IMR-90 (cell line): ENCODE measurements at regions of chr7 and their contacts with region 1.

Region 1: DNA sequence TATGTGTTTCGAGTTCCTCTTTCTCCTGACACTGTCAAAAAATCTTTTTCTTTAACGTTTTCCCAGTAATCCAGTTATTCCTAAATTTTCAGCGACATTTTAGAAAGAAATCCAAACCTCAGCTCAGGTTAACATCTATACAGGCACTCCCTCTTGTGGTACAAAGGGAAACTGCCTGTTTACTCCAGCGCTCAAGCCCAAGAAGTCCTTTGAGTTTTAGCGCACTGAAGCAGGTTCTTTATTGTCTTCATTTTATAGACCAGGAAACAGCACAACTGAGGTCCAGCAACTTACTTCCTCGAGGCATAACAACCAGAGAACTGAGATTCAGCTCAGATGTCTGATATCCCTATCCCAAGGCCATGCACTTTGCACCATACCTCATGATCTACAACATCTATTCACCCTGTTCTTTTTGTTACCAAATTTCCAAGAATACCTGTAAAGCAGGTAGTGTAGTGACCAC is 287.2 kb upstream of the MKLN1 start:
- DNase-seq: peak; percentile 77
- ATAC-seq: peak; percentile 85
- H3K4me3 ChIP-seq: no peak overlapping the region
- H3K27ac ChIP-seq: no peak overlapping the region
- H3K4me1 ChIP-seq: peaks cover 11% of the 10 kb centered on the region
- H3K27me3 ChIP-seq: no peaks in the 10 kb centered on the region
- CTCF ChIP-seq: peak; percentile 88
- POLR2A ChIP-seq: no peak
- RAD21 ChIP-seq: peak; percentile 91

Region 2: GRCh38 chr7:130896898-130897514 is 143.5 kb before region 1 on chr7:
- CTCF ChIA-PET with region 1: interaction called, 7 read pairs
- POLR2A ChIA-PET with region 1: no interaction called
- dilution Hi-C with region 1: no loop called
- in situ Hi-C with region 1: no loop called
- intact Hi-C with region 1: loop called (anchors 1 kb)
- DNase-seq: peak; percentile 84
- ATAC-seq: peak; percentile 24
- H3K4me3 ChIP-seq: no peak overlapping the region
- H3K27ac ChIP-seq: peak overlapping the region; percentile 71
- H3K4me1 ChIP-seq: peaks cover 52% of the 10 kb centered on the region
- H3K27me3 ChIP-seq: no peaks in the 10 kb centered on the region
- CTCF ChIP-seq: peak; percentile 80
- POLR2A ChIP-seq: no peak
- RAD21 ChIP-seq: peak; percentile 83

Region 3: GRCh38 chr7:130961128-130961601 is 79.3 kb before region 1 on chr7:
- CTCF ChIA-PET with region 1: interaction called, 5 read pairs
- POLR2A ChIA-PET with region 1: no interaction called
- dilution Hi-C with region 1: no loop called
- in situ Hi-C with region 1: no loop called
- intact Hi-C with region 1: loop called (anchors 5 kb)
- DNase-seq: peak; percentile 77
- ATAC-seq: peak; percentile 8
- H3K4me3 ChIP-seq: peak overlapping the region; percentile 30; the same call in 1 of the 2 replicates
- H3K27ac ChIP-seq: peak overlapping the region; percentile 91
- H3K4me1 ChIP-seq: peaks cover 25% of the 10 kb centered on the region
- H3K27me3 ChIP-seq: no peaks in the 10 kb centered on the region
- CTCF ChIP-seq: no peak
- POLR2A ChIP-seq: no peak
- RAD21 ChIP-seq: no peak

Region 4: DNA sequence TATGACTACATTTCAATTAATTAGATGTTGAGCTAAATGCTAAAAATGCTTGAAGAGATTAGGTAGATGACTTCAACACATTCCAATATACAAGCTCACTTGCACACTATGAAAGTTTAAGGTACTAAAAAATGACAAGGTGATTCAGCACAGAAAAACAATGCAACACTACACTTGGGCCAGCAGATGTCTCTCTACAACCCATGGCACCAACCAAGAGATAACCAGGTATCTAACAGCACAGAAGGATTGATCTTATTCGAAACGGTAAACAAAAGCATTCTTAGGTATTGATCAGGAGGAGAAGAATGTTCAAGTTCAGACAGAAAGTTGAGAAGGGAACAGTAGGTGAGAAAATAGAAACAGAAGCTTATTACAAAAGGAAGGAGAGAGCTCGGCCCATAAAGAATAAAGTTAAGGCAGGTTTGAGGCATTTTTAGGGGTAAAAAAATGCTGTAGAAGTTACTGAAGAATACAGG is 58.3 kb before region 1 on chr7:
- CTCF ChIA-PET with region 1: interaction called, 3 read pairs
- POLR2A ChIA-PET with region 1: no interaction called
- dilution Hi-C with region 1: no loop called
- in situ Hi-C with region 1: no loop called
- intact Hi-C with region 1: loop called (anchors 1 kb)
- DNase-seq: peak; percentile 59
- ATAC-seq: peak; percentile 73
- H3K4me3 ChIP-seq: no peak overlapping the region
- H3K27ac ChIP-seq: no peak overlapping the region
- H3K4me1 ChIP-seq: peaks cover 5% of the 10 kb centered on the region; the same call in 1 of the 2 replicates
- H3K27me3 ChIP-seq: no peaks in the 10 kb centered on the region
- CTCF ChIP-seq: peak; percentile 62
- POLR2A ChIP-seq: no peak
- RAD21 ChIP-seq: peak; percentile 79

Region 5: DNA sequence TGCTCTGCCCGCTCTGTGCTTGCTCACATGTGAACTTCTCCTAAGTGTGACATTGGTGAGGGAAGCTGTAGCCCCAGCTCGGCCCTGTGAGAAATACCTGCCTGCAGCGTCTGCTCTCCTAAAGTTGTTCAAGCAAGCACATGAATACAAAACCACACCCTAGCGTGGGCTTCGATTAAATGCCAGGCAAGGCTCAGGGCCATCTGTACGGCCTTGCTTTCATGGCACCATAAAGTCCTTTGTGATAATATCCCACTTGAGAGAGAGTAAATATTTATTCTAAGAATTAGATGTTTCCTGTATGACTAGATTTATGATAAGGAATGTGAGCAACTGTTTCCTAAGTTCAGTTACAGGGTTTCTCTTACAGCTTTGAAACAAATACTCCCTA is 43.7 kb before region 1 on chr7:
- CTCF ChIA-PET with region 1: no interaction called
- POLR2A ChIA-PET with region 1: no interaction called
- dilution Hi-C with region 1: no loop called
- in situ Hi-C with region 1: no loop called
- intact Hi-C with region 1: no loop called
- DNase-seq: peak; percentile 61
- ATAC-seq: peak; percentile 75
- H3K4me3 ChIP-seq: no peak overlapping the region
- H3K27ac ChIP-seq: peak overlapping the region; percentile 91
- H3K4me1 ChIP-seq: peaks cover 15% of the 10 kb centered on the region
- H3K27me3 ChIP-seq: no peaks in the 10 kb centered on the region
- CTCF ChIP-seq: no peak
- POLR2A ChIP-seq: no peak
- RAD21 ChIP-seq: no peak

Region 6: GRCh38 chr7:131274984-131275383 is 234.5 kb after region 1 on chr7:
- CTCF ChIA-PET with region 1: no interaction called
- POLR2A ChIA-PET with region 1: interaction called, 15 read pairs
- dilution Hi-C with region 1: no loop called
- in situ Hi-C with region 1: no loop called
- intact Hi-C with region 1: no loop called
- DNase-seq: no peak
- ATAC-seq: no peak
- H3K4me3 ChIP-seq: no peak overlapping the region
- H3K27ac ChIP-seq: no peak overlapping the region
- H3K4me1 ChIP-seq: no peaks in the 10 kb centered on the region
- H3K27me3 ChIP-seq: no peaks in the 10 kb centered on the region
- CTCF ChIP-seq: no peak
- POLR2A ChIP-seq: no peak
- RAD21 ChIP-seq: no peak